ENCODE measurements at regions of chr15 and their contacts with region 1.

Region 1: GRCh38 chr15:66946578-66947164 is 118.7 kb upstream of the SMAD3 start:
- DNase-seq: peak; percentile 78
- H3K4me3 ChIP-seq: no peak overlapping the region
- H3K27ac ChIP-seq: no peak overlapping the region
- H3K4me1 ChIP-seq: peaks cover 0 to 15% (median 0%) of the 10 kb centered on the region in 4 donors
- H3K27me3 ChIP-seq: no peaks in the 10 kb centered on the region
- CTCF ChIP-seq: peak; percentile 90 to 94 (median 93)
- EP300 ChIP-seq: no peak
- POLR2A ChIP-seq: no peak

Region 2: DNA sequence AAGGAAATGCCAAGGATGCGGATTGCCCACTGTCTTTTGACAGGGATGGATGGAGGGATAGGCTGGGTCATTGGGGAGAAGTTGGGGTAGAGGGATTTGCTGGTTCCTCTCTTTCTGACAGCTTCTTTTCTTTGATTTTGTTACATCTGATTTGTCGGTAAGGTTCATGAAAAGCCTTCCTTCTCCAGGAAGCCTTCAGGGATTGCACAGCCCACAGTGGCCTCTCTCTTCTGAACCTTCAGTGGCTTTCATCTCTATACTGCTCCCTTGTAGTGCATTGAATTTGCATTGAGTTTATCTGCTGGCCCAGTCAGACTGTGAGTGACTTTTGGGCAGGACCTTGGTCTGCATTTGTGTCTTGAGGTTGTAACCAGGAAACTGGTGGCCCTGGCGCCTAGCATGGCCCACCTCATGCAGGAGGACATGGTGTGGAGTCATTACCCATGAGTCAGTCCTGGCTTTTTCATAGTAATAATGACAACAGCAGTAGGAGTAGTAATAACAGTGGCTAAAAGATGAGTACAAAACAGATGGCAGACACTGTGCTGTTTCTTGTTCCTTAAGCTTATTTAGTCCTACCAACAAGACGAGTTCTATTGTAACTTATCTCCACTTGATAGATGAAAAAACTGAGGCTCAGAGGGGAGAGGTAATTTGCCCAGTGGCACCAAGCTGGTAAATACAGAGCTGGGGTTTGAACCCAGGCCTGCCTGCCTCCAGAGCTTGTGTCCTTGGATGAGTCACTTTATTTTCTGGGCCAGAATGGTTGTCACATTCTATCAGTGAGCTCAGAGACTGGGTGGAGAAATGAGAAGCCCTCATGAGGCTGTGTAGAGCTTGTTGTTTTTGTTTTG is 216.3 kb before region 1 on chr15:
- in situ Hi-C with region 1: no loop called
- intact Hi-C with region 1: no loop called
- DNase-seq: no peak
- H3K4me3 ChIP-seq: no peak overlapping the region
- H3K27ac ChIP-seq: peak overlapping the region; percentile 61 to 79 (median 68)
- H3K4me1 ChIP-seq: peaks cover 4 to 24% (median 16%) of the 10 kb centered on the region in 4 donors
- H3K27me3 ChIP-seq: no peaks in the 10 kb centered on the region
- CTCF ChIP-seq: no peak
- EP300 ChIP-seq: no peak
- POLR2A ChIP-seq: no peak

Region 3: GRCh38 chr15:67296188-67296587 is 349.5 kb after region 1 on chr15:
- in situ Hi-C with region 1: loop called in 3 of 4 experiments (anchors 5 to 10 kb)
- intact Hi-C with region 1: no loop called
- DNase-seq: no peak
- H3K4me3 ChIP-seq: no peak overlapping the region
- H3K27ac ChIP-seq: no peak overlapping the region
- H3K4me1 ChIP-seq: no peaks in the 10 kb centered on the region
- H3K27me3 ChIP-seq: no peaks in the 10 kb centered on the region
- CTCF ChIP-seq: no peak
- EP300 ChIP-seq: no peak
- POLR2A ChIP-seq: no peak

Region 4: GRCh38 chr15:67303490-67304363 is 357.1 kb after region 1 on chr15:
- in situ Hi-C with region 1: loop called in 3 of 4 experiments (anchors 5 to 10 kb)
- intact Hi-C with region 1: loop called (anchors 2 kb)
- DNase-seq: peak; percentile 10
- H3K4me3 ChIP-seq: no peak overlapping the region
- H3K27ac ChIP-seq: no peak overlapping the region
- H3K4me1 ChIP-seq: no peaks in the 10 kb centered on the region
- H3K27me3 ChIP-seq: no peaks in the 10 kb centered on the region
- CTCF ChIP-seq: peak; percentile 47 to 73 (median 56)
- EP300 ChIP-seq: no peak
- POLR2A ChIP-seq: no peak

Region 5: DNA sequence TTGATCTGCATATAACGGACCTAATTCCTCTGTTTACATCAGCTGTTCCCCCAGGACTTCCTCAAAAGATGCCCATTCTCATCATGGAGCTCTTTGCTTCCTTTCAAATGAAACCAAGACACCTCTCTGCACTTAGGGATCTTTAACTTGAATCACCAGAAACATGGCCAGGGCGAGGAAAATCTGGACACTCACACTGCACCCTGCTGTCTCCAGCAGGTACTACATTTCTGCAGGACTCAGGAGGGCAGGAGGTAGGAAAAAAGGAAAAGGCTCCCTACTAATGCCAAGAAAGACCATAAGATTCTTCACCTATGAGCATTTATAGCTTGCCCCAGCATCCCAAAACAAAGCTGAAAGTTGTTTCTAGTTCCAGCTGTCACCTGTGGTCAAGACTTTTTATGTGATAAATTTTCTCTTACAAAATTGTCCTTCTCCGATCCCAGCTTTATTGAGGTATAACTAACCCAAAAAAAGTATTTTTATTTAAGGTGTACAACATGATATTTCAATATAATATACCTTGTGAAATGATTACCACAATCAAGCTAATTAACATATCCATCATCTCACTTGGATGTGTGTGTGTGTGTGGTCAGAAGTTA is 486.9 kb after region 1 on chr15:
- in situ Hi-C with region 1: loop called (anchors 10 to 25 kb)
- intact Hi-C with region 1: loop called (anchors 5 kb)
- DNase-seq: peak; percentile 37
- H3K4me3 ChIP-seq: no peak overlapping the region
- H3K27ac ChIP-seq: no peak overlapping the region
- H3K4me1 ChIP-seq: peaks cover 0 to 5% (median 3%) of the 10 kb centered on the region in 4 donors
- H3K27me3 ChIP-seq: no peaks in the 10 kb centered on the region
- CTCF ChIP-seq: peak; percentile 55 to 74 (median 73)
- EP300 ChIP-seq: no peak
- POLR2A ChIP-seq: no peak

Measured in transverse colon (tissue), 4 donors.